Adrenal gland (tissue), 19 donors: ENCODE measurements at regions of chr5 and their contacts with region 1.

Region 1: GRCh38 chr5:79020861-79021561 is 35.9 kb upstream of the ARSB start:
- DNase-seq: peak; percentile 42 to 71 (median 56)
- H3K4me3 ChIP-seq: peak overlapping the region in 1 of 4 donors; percentile 37
- H3K27ac ChIP-seq: no peak overlapping the region
- H3K4me1 ChIP-seq: no peaks in the 10 kb centered on the region
- H3K27me3 ChIP-seq: no peaks in the 10 kb centered on the region
- CTCF ChIP-seq: peak; percentile 48 to 85 (median 63)
- POLR2A ChIP-seq: no peak

Region 2: GRCh38 chr5:79133657-79134451 is 112.8 kb after region 1 on chr5:
- intact Hi-C with region 1: loop called (anchors 2 to 5 kb)
- DNase-seq: peak; percentile 49 to 86 (median 70)
- H3K4me3 ChIP-seq: peak overlapping the region in 1 of 4 donors; percentile 5
- H3K27ac ChIP-seq: peak overlapping the region in 2 of 5 donors; percentile 29 to 46
- H3K4me1 ChIP-seq: peaks cover 7 to 15% of the 10 kb centered on the region in 2 donors
- H3K27me3 ChIP-seq: no peaks in the 10 kb centered on the region
- CTCF ChIP-seq: peak; percentile 54 to 74 (median 65)
- POLR2A ChIP-seq: no peak

Region 3: GRCh38 chr5:79464695-79465332 is 443.8 kb after region 1 on chr5:
- intact Hi-C with region 1: loop called (anchors 10 kb)
- DNase-seq: no peak
- H3K4me3 ChIP-seq: no peak overlapping the region
- H3K27ac ChIP-seq: no peak overlapping the region
- H3K4me1 ChIP-seq: no peaks in the 10 kb centered on the region
- H3K27me3 ChIP-seq: no peaks in the 10 kb centered on the region
- CTCF ChIP-seq: peak; percentile 40 to 72 (median 64)
- POLR2A ChIP-seq: no peak

Region 4: DNA sequence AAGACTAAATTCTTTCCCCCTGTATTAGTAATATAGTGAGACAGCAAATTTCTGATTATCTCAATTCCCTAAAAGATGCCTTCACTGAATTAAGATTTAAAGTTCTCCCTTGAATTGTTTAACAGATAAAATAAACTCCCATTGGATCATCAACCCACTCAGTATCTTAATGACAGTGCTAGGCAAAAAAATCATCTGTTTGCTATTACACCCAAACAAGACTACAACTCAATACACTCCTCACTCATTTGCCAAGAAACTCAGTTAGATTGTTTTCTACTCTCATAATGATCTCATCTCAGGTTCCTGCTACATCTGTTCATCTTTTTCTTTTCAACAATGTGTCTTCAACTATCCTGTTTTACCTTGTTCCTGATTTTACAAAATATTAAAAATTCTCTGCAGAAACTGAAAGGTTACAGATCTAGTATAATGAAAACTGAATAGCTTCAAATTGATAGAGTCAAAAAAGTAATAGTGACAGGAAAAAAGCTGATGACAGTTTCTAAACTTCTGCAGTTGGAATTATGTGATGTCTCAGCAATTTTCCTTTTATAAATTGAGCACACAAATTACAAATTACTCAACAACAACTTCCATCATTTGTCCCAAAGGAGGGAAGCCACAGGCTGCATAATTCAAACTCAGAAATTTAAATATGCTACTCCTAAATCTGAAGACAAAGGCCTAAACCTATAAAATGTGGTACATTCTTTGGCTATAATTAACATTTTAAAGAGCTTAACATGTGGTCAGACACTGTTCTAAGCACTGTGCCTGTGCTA is 453.5 kb after region 1 on chr5:
- intact Hi-C with region 1: loop called (anchors 10 kb)
- DNase-seq: no peak
- H3K4me3 ChIP-seq: no peak overlapping the region
- H3K27ac ChIP-seq: no peak overlapping the region
- H3K4me1 ChIP-seq: no peaks in the 10 kb centered on the region
- H3K27me3 ChIP-seq: no peaks in the 10 kb centered on the region
- CTCF ChIP-seq: no peak
- POLR2A ChIP-seq: no peak